ENCODE measurements at regions of chr18 and their contacts with region 1.

Region 1: DNA sequence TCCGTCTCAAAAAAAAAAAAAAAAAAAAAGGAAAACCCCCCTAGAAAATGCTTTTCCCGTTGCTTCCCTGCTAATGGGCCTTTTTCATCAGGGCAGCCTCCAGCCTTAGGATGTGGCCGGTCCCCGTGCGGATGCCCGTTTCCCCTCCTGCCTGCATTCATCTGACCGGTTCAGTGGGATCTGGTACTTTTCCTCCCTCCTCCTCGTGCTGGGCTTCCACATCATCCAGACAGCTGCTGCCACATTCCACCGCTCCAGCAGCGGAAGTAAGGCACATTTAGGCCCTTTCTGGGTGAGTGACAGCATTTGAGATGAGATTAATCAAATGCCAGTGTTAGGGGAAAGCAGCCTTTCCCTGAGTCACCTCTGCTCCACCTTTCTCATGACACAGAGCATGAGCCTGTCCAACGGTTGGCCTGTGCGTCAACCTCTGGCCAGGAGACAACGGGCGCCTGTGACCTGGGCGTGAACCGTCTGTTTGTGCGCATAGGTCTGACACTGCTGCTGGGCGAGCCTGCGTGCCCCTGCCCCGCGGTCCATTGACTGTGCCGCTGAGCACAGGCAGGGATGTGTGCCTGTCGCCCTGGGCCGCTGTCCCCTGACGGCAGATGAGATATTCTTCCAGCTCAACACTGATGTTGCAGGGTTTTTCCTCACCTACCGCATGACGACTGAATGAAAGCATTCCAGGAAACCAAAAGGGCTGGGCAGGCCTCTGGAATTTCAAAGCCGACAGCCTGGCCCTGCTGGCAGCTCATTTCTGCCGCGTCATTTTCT is 174.0 kb downstream of the TGIF1 start:
- DNase-seq: peak; percentile 95
- H3K4me3 ChIP-seq: peak overlapping the region; percentile 51
- CTCF ChIP-seq: no peak

Region 2: DNA sequence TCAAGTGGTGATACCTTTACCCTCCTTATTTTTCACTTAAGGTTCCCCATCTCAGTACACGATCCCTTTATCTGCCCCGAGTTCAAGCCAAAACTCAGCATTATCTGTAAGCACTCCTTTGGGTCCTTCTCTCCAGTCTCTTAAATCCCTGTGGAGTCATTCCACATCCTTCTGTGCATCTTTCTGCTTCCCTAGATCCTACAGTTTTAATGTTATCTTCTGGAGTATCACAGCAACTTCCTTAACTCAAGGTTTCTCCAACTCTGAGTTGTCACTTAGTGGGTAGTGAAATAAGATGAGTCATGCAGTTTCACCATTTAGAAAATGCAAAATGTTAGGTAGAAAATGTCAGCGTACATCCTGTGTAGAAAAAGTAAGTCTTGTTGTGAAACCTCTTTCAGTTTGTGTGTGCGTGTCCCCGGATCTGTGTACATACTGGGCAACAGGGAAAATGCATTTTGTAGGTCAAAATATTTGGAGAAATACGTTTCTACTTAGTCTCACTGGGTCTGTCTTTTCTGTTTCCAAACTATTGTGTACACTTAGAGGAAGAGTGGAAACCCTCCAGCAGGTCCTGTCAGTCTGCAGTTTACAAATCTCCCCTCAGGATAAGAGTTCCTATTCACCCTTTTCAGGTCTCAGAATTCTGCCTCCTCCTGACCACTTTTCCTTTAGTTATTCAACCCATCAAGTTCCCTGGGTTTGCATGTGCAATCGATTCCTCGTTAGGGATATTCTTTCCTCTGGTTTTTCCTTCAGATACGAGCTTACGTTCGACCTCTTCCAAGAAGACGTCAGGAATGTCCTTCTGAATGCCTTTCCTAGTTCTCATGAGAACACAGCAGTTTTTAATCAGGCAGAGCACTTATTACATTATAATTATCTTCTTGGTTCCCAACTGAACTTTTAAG is 19.2 kb before region 1 on chr18:
- CTCF ChIA-PET with region 1: interaction called, 5 read pairs
- POLR2A ChIA-PET with region 1: interaction called, 26 read pairs
- DNase-seq: peak; percentile 98
- H3K4me3 ChIP-seq: peak overlapping the region; percentile 56
- CTCF ChIP-seq: no peak

Region 3: DNA sequence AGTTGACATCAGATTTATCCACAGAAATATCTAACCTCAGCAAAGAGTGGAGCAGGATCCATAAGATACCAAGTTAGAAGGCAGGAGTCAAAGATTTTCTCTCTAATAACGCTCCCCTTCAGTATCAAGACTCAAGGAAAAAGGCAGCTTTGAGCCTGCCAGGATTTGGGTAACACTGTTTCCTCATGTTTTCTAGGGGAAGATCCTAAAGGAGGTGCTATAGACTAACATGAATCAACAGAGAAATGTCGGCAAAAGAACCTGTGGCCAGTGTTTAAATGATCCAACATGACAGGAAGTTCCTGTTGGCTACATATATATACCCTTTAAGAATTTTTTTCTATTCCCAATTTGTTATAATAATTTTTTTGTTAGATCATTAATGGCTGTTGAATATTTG is 228.4 kb after region 1 on chr18:
- CTCF ChIA-PET with region 1: no interaction called
- POLR2A ChIA-PET with region 1: no interaction called
- DNase-seq: no peak
- H3K4me3 ChIP-seq: no peak overlapping the region
- CTCF ChIP-seq: no peak